ENCODE measurements at regions of chr17 and their contacts with region 1.

Region 1: GRCh38 chr17:82418001-82418986 is at the starts of genes HEXD and OGFOD3:
- DNase-seq: peak; percentile 87
- H3K4me3 Mint-ChIP-seq: peak within 1 kb of the TSS; percentile 79
- H3K27ac Mint-ChIP-seq: peak within 1 kb of the TSS; percentile 78
- H3K4me1 Mint-ChIP-seq: peaks cover 29% of the 10 kb centered on the region
- H3K27me3 Mint-ChIP-seq: no peaks in the 10 kb centered on the region
- total RNA-seq, gene HEXD: 21.7 to 26.0 TPM
- total RNA-seq, gene OGFOD3: 29.7 to 32.2 TPM

Region 2: DNA sequence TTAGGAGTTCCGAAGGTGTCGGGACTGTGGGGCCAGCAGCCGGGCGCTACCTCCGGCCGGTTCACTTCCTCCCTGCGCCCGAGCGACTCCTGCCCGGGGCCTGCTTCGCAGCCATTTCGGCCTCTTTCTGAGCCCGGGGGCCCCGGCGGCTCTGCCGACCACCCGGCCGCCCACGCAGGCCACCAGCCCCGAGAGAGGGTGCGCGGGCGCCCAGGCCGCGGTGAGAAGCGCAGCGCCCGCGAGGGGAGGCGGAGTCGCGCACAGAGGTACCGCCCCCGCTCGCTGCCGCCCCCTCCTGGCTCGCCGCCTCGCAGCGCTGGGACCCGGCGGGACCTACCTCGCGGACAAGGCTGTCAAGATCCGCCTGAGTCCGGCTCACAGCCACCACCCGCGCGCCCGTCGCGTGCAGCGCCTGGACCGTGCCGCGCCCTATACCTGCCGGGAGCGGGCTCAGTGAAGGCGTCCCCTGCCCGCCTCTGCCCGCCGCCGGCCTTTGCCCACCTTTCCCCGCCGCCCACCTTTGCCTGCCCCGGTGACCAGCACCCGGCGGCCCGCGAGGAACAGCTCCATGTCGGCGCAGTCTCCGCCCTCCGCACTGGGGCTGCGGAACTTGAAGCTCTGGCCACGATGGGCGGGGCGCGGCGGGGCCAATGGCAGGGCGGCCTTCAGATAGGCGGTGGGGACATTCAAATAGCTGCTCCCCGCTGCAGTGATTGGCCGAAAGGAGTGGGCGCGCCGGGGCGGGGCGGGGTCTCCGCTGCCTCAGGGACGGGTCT is 381.0 kb before region 1 on chr17 and contains the start of gene DCXR:
- CTCF ChIA-PET with region 1: no interaction called
- POLR2A ChIA-PET with region 1: no interaction called
- intact Hi-C with region 1: loop called (anchors 10 kb)
- DNase-seq: peak; percentile 97
- H3K4me3 Mint-ChIP-seq: peak within 1 kb of the TSS; percentile 83
- H3K27ac Mint-ChIP-seq: peak within 1 kb of the TSS; percentile 88
- H3K4me1 Mint-ChIP-seq: peaks cover 19% of the 10 kb centered on the region
- H3K27me3 Mint-ChIP-seq: no peaks in the 10 kb centered on the region
- total RNA-seq, gene DCXR: 105 to 115 TPM

Region 3: GRCh38 chr17:82351716-82352488 is 66.4 kb before region 1 on chr17:
- CTCF ChIA-PET with region 1: interaction called, 8 read pairs
- POLR2A ChIA-PET with region 1: no interaction called
- intact Hi-C with region 1: loop called (anchors 1 kb)
- DNase-seq: peak; percentile 88
- H3K4me3 Mint-ChIP-seq: no peak overlapping the region
- H3K27ac Mint-ChIP-seq: no peak overlapping the region
- H3K4me1 Mint-ChIP-seq: peaks cover 4% of the 10 kb centered on the region
- H3K27me3 Mint-ChIP-seq: peaks cover 4% of the 10 kb centered on the region

Region 4: GRCh38 chr17:82438953-82439824 is 20.9 kb after region 1 on chr17:
- CTCF ChIA-PET with region 1: no interaction called
- POLR2A ChIA-PET with region 1: no interaction called
- intact Hi-C with region 1: no loop called
- DNase-seq: no peak
- H3K4me3 Mint-ChIP-seq: no peak overlapping the region
- H3K27ac Mint-ChIP-seq: no peak overlapping the region
- H3K4me1 Mint-ChIP-seq: peaks cover 7% of the 10 kb centered on the region
- H3K27me3 Mint-ChIP-seq: no peaks in the 10 kb centered on the region

Region 5: GRCh38 chr17:82450170-82451106 is 32.1 kb after region 1 on chr17 and contains the start of gene CYBC1:
- CTCF ChIA-PET with region 1: no interaction called
- POLR2A ChIA-PET with region 1: interaction called, 4 read pairs
- intact Hi-C with region 1: loop called (anchors 1 kb)
- DNase-seq: peak; percentile 97
- H3K4me3 Mint-ChIP-seq: peak within 1 kb of the TSS; percentile 85
- H3K27ac Mint-ChIP-seq: peak within 1 kb of the TSS; percentile 99
- H3K4me1 Mint-ChIP-seq: peaks cover 46% of the 10 kb centered on the region
- H3K27me3 Mint-ChIP-seq: no peaks in the 10 kb centered on the region
- total RNA-seq, gene CYBC1: 333 to 343 TPM

Region 6: GRCh38 chr17:82457997-82458864 is 39.9 kb after region 1 on chr17 and contains the start of gene NARF:
- CTCF ChIA-PET with region 1: no interaction called
- POLR2A ChIA-PET with region 1: no interaction called
- intact Hi-C with region 1: loop called (anchors 1 kb)
- DNase-seq: peak; percentile 97
- H3K4me3 Mint-ChIP-seq: peak within 1 kb of the TSS; percentile 78
- H3K27ac Mint-ChIP-seq: peak within 1 kb of the TSS; percentile 97
- H3K4me1 Mint-ChIP-seq: peaks cover 40% of the 10 kb centered on the region
- H3K27me3 Mint-ChIP-seq: no peaks in the 10 kb centered on the region
- total RNA-seq, gene NARF: 101 to 110 TPM